ENCODE measurements at regions of chr17 and their contacts with region 1.

Region 1: GRCh38 chr17:8326511-8327302 is 12.9 kb upstream of the ODF4 start:
- DNase-seq: peak; percentile 47
- ATAC-seq: peak; percentile 76
- H3K4me3 Mint-ChIP-seq: peak overlapping the region; percentile 72
- H3K27ac Mint-ChIP-seq: no peak overlapping the region
- H3K4me1 Mint-ChIP-seq: peaks cover 19% of the 10 kb centered on the region
- H3K27me3 Mint-ChIP-seq: peaks cover 35% of the 10 kb centered on the region
- CTCF ChIP-seq: no peak

Region 2: DNA sequence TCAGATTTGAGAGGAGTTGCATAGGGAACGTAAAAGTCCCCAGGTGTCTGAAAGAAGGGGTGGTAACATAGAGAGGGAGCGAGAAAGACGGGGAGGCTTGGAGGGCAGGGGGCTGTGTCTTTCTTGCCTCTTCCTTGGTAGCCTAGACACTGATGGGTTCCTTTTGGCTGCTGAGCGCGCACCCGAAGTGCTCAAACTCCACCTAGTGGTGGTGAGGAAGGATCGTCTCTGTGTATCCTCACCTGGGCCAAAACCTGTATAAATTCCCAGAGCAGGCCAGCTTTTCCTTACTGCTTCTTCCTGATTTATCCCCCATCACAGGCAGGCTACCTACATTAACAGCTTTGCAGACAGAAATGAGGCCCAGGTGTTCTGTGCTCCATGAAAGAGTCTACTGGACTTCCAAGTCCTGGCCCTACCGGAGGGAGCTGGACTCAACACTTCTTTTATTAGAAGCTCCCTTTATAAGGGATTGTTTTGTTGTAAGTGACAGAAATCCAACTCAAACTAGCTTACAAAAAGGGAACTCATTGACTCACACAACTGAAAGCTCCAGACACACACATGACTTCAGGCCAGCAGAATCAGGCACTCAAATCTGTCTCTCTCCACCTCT is 26.0 kb before region 1 on chr17:
- CTCF ChIA-PET with region 1: interaction called, 18 read pairs
- POLR2A ChIA-PET with region 1: interaction called, 8 read pairs
- DNase-seq: peak; percentile 57
- ATAC-seq: peak; percentile 98
- H3K4me3 Mint-ChIP-seq: peak overlapping the region; percentile 41
- H3K27ac Mint-ChIP-seq: no peak overlapping the region; the same call in 1 of the 2 replicates
- H3K4me1 Mint-ChIP-seq: peaks cover 6% of the 10 kb centered on the region; the same call in 1 of the 2 replicates
- H3K27me3 Mint-ChIP-seq: no peaks in the 10 kb centered on the region
- CTCF ChIP-seq: peak; percentile 80

Region 3: DNA sequence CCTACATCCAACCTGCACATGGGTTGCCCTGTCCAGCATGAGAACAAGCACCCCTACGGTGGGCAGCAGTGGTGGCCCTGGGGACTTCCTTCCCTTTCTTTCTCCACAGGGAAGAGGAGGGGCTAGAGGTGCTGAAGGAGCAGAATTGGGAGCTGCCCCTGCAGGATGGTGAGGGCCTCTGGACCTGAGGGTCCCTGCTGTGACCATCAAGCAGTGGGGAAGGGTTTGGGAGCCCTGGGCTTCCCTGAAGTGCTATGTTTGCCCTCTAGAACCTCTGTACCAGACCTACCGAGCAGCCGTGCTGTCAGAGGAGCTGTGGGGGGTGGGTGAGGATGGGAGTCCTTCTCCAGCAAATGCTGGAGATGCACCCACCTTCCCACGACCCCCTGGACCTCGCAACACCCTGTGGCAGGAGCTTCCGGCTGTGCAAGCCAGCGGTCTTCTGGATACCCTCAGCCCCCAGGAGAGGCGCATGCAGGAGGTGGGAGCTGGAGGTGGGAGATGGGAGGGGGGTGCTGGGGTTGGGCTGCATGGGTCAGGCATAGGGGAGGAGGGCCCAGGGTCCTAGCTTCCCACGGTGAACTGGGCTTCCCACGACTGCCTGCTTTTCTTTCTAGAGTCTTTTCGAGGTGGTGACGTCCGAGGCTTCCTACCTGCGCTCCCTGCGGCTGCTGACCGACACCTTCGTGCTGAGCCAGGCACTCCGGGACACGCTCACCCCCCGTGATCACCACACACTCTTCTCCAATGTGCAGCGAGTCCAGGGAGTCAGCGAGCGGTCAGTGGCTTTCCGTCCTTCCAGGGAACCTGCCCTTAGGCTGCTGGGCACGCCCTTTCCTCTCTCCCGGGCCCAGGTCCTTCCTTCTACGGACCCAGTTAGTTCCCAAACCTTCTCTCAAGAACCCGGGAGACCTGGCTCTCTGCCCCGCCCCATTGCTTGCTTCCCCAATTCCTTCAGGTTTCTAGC is 11.6 kb before region 1 on chr17:
- CTCF ChIA-PET with region 1: interaction called, 11 read pairs
- POLR2A ChIA-PET with region 1: interaction called, 4 read pairs
- DNase-seq: peak; percentile 35
- ATAC-seq: peak; percentile 35
- H3K4me3 Mint-ChIP-seq: peak overlapping the region; percentile 88
- H3K27ac Mint-ChIP-seq: no peak overlapping the region
- H3K4me1 Mint-ChIP-seq: peaks cover 34% of the 10 kb centered on the region
- H3K27me3 Mint-ChIP-seq: peaks cover 35% of the 10 kb centered on the region
- CTCF ChIP-seq: no peak

Region 4: DNA sequence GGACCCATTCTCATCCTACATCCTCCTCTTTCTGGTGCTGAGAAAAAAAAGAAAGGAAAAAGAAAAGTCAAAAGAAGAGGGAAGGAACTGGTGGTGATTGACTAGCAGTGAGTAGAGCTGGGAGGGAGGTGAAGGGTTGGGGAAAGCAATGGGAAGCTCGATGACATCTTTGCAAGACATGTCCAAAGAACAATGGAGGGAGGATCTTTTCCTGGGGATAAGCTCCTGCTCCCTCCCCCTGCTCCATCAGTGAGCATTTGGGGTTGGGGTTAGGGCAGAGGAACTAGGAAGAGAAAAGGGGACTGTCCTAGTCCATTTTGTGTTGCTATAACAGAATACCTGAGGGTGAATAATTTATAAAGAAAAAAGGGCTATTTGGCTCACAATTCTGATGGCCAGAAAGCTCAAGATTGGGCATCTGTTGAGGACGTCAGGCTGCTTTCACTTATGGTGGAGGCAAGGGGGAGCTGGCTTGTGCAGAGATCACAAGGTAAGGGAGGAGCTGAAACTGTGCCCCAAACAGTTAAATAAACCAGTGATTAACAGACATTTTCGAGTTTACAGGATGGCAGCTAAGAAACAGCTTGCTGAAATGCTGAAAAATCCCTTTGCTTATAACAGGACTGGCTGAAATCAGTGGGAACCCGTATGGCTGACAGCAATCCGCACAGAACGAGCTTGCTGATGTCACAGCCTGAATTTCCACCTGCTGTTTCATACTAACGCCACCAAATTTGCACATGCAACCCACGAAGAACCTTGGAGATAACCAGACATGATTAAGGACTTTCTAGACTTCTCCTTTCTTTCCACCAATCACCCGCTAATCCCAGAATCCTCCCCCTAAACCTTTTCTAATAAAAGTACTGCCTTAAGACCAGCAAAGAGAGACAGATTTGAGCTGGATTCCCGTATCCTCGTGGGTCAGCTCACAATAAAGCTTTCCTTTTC is 11.4 kb after region 1 on chr17:
- CTCF ChIA-PET with region 1: interaction called, 34 read pairs
- POLR2A ChIA-PET with region 1: no interaction called
- DNase-seq: no peak
- ATAC-seq: no peak
- H3K4me3 Mint-ChIP-seq: no peak overlapping the region
- H3K27ac Mint-ChIP-seq: peak overlapping the region; percentile 60
- H3K4me1 Mint-ChIP-seq: peaks cover 19% of the 10 kb centered on the region
- H3K27me3 Mint-ChIP-seq: no peaks in the 10 kb centered on the region
- CTCF ChIP-seq: no peak

Region 5: GRCh38 chr17:8376271-8377067 is 49.8 kb after region 1 on chr17 and contains the start of gene KRABD2:
- CTCF ChIA-PET with region 1: interaction called, 12 read pairs
- POLR2A ChIA-PET with region 1: interaction called, 15 read pairs
- DNase-seq: peak; percentile 94
- ATAC-seq: peak; percentile 88
- H3K4me3 Mint-ChIP-seq: peak within 1 kb of the TSS; percentile 84
- H3K27ac Mint-ChIP-seq: peak within 1 kb of the TSS; percentile 96
- H3K4me1 Mint-ChIP-seq: peaks cover 41% of the 10 kb centered on the region
- H3K27me3 Mint-ChIP-seq: no peaks in the 10 kb centered on the region
- CTCF ChIP-seq: peak; percentile 46; the same call in 1 of the 2 replicates